ENCODE measurements at regions of chr3 and their contacts with region 1.

Region 1: DNA sequence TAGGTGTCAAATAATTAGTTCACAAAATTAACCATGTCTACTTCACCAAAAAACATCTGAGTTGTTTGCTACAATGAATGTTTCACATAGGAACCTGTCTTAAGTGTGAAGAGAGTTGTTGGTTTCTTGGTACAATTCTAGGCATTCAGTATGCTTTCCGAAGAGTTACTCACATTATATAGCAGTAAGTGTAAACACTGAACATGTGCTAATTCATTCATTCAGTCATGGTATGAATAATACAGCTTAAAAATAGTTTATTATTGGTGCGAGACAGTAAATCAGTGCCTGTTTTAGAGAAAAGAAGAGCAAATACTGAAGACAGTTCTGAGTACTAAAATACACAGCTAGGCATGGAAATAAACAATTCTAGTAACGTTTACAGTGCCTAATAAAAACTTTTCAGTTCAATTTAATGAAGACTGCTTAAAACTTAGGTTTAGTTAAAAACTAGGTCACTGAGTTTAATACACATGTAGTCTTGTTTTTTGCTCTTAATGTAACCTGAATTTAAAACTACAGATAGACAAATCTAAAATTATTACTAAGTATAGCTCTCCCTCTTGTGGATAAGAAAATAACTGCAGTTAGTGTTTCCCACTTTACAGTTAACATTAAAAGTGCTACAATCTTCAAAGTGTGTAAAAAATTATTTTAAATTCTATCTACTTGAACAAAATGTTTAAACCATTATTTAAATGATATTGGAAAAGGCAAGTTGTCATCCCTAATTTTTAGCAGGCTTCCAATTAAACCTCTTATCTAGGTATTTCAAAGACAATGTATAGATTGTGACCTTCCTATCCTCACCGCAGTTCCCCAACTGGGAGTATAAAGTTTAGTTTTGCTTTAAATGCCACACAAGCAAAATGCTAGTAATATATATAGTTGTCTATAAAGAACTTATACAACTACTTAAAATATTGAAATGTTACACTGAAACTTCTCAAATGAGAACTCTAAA is 20.1 kb upstream of the ZCWPW2 start:
- DNase-seq: no peak
- ATAC-seq: peak; percentile 22
- H3K4me3 Mint-ChIP-seq: no peak overlapping the region
- H3K27ac Mint-ChIP-seq: peak overlapping the region; percentile 34
- H3K4me1 Mint-ChIP-seq: peaks cover 26% of the 10 kb centered on the region
- H3K27me3 Mint-ChIP-seq: no peaks in the 10 kb centered on the region
- CTCF ChIP-seq: peak; percentile 84

Region 2: GRCh38 chr3:27721717-27722542 is 606.5 kb before region 1 on chr3 and contains the start of gene EOMES:
- CTCF ChIA-PET with region 1: interaction called, 72 read pairs
- POLR2A ChIA-PET with region 1: interaction called, 3 read pairs
- intact Hi-C with region 1: no loop called
- DNase-seq: peak; percentile 82
- ATAC-seq: peak; percentile 72
- H3K4me3 Mint-ChIP-seq: peak within 1 kb of the TSS; percentile 78
- H3K27ac Mint-ChIP-seq: peak within 1 kb of the TSS; percentile 83
- H3K4me1 Mint-ChIP-seq: peaks cover 26% of the 10 kb centered on the region
- H3K27me3 Mint-ChIP-seq: peaks cover 42% of the 10 kb centered on the region
- CTCF ChIP-seq: peak; percentile 77
- total RNA-seq, gene EOMES: 4.2 to 4.4 TPM

Region 3: DNA sequence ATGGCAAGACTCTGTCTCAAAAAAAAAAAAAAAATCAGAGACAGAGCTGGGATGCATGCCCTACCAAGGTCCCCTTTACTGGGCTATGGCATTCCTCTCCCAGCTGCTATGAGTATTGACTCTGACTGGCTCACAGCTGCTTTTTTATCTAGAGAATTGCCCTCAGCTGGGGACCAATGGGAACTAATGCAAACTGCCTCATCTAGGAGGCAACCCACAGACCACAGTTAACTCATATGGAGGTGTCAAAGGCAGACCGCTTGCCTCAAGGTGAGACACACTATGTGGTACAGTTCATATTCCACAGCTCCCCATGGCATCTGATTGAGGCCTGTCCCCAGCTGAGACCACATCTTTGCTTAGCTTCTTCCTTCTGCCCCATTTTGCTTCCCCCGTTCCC is 422.8 kb before region 1 on chr3:
- CTCF ChIA-PET with region 1: no interaction called
- POLR2A ChIA-PET with region 1: no interaction called
- intact Hi-C with region 1: loop called (anchors 10 kb)
- DNase-seq: peak; percentile 71
- ATAC-seq: peak; percentile 83
- H3K4me3 Mint-ChIP-seq: no peak overlapping the region
- H3K27ac Mint-ChIP-seq: no peak overlapping the region
- H3K4me1 Mint-ChIP-seq: peaks cover 47% of the 10 kb centered on the region
- H3K27me3 Mint-ChIP-seq: no peaks in the 10 kb centered on the region
- CTCF ChIP-seq: no peak

Region 4: DNA sequence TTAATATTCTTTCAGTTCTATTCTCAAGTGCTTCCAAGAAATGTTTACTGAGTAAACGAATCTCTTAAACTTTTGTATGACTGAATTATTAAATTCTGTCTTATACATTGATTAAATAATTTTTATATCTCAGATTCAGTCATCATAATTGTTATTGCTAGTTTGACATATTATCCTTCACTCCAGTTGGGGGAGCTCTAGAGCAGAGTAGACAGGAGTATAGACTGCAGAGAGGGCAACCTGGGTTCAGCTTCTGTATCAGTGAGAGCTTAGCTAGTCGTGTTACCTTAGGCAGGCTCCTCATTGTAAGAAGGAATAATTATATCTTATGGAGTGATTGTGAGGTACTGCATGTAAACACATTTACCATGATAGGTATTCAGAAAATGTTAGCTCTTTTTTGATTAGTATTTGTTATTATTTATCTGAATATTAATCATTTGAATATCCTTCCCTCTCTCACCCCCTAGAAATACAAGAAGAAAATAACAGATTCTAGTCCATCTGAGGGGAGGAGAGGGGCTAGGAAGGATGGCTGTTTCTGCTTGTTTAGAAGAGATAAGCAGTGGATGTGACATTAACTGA is 10.9 kb before region 1 on chr3:
- CTCF ChIA-PET with region 1: interaction called, 12 read pairs
- POLR2A ChIA-PET with region 1: no interaction called
- intact Hi-C with region 1: no loop called
- DNase-seq: peak; percentile 40
- ATAC-seq: peak; percentile 96
- H3K4me3 Mint-ChIP-seq: no peak overlapping the region
- H3K27ac Mint-ChIP-seq: no peak overlapping the region
- H3K4me1 Mint-ChIP-seq: peaks cover 21% of the 10 kb centered on the region
- H3K27me3 Mint-ChIP-seq: no peaks in the 10 kb centered on the region
- CTCF ChIP-seq: peak; percentile 69

Region 5: GRCh38 chr3:28495301-28495700 is 166.8 kb after region 1 on chr3:
- CTCF ChIA-PET with region 1: no interaction called
- POLR2A ChIA-PET with region 1: no interaction called
- intact Hi-C with region 1: no loop called
- DNase-seq: no peak
- ATAC-seq: no peak
- H3K4me3 Mint-ChIP-seq: no peak overlapping the region
- H3K27ac Mint-ChIP-seq: no peak overlapping the region
- H3K4me1 Mint-ChIP-seq: no peaks in the 10 kb centered on the region
- H3K27me3 Mint-ChIP-seq: no peaks in the 10 kb centered on the region
- CTCF ChIP-seq: no peak

Measured in activated CD8-positive, alpha-beta T cell treated with anti-CD3 and anti-CD28 coated beads for 36 hours (primary cell).